ENCODE measurements at regions of chr3 and their contacts with region 1.

Region 1: GRCh38 chr3:195259475-195260279 is 11.3 kb downstream of the XXYLT1 start:
- DNase-seq: peak; percentile 91
- ATAC-seq: peak; percentile 74
- H3K4me3 ChIP-seq: peak overlapping the region; percentile 92
- H3K27ac ChIP-seq: peak overlapping the region; percentile 73
- H3K4me1 ChIP-seq: peaks cover 16% of the 10 kb centered on the region
- H3K27me3 ChIP-seq: no peaks in the 10 kb centered on the region
- CTCF ChIP-seq: peak; percentile 46; the same call in 1 of the 2 replicates

Region 2: DNA sequence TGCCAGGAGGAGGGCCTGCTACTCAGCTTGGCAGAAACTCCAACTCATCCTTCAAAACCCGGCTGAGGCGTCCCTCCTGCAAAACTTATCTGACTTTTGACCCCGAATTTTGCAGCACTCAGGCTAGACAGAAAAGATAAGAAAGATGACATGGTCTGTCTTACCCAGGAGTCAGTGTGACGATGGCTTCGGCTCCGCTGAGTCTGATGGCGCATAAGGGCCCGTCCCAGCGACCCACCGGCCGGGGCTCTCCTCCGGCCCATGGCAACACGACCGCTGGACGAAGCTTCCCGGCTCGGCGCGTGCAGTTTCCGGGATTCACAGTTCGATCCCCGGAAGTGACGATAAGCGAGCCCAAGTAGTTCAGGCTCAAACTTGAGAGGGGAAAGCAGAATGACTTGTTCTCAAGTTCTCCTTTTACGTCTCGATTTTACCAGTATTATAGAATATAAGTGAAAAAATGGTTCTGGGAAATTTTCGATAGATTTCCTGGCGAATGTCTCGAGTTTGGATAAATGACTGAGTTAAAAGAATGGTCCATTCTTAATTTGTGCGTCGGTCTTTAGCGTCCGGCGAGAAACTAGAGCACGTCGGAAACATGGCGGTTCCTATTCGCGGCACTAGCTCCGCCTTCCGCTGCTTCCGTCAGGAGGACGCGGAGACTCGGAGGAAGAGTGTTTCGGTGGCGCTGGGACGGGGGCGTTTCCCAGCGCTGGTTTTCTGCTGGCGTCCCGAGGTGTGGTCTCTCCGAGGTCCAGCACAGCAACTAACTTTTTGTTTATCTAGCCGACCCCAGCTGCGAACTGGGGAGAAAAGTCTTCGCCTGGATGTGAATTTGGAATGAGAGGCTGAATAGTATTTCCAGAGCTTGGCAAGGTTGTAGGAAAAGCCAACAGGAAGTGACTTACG is 587.5 kb before region 1 on chr3 and contains the start of gene LSG1:
- CTCF ChIA-PET with region 1: interaction called, 10 read pairs
- POLR2A ChIA-PET with region 1: no interaction called
- intact Hi-C with region 1: loop called (anchors 2 kb)
- DNase-seq: peak; percentile 97
- ATAC-seq: peak; percentile 96
- H3K4me3 ChIP-seq: peak within 1 kb of the TSS; percentile 87
- H3K27ac ChIP-seq: peak within 1 kb of the TSS; percentile 71
- H3K4me1 ChIP-seq: peaks cover 14% of the 10 kb centered on the region
- H3K27me3 ChIP-seq: no peaks in the 10 kb centered on the region
- CTCF ChIP-seq: no peak
- total RNA-seq, gene LSG1: 83.8 and 102 TPM in 2 replicates

Region 3: GRCh38 chr3:194964821-194965220 is 294.9 kb before region 1 on chr3:
- CTCF ChIA-PET with region 1: no interaction called
- POLR2A ChIA-PET with region 1: no interaction called
- intact Hi-C with region 1: loop called (anchors 1 kb)
- DNase-seq: peak; percentile 40
- ATAC-seq: peak; percentile 73
- H3K4me3 ChIP-seq: no peak overlapping the region
- H3K27ac ChIP-seq: no peak overlapping the region
- H3K4me1 ChIP-seq: no peaks in the 10 kb centered on the region
- H3K27me3 ChIP-seq: no peaks in the 10 kb centered on the region
- CTCF ChIP-seq: peak; percentile 36

Region 4: GRCh38 chr3:195001961-195002861 is 257.5 kb before region 1 on chr3:
- CTCF ChIA-PET with region 1: no interaction called
- POLR2A ChIA-PET with region 1: no interaction called
- intact Hi-C with region 1: loop called (anchors 5 kb)
- DNase-seq: peak; percentile 87
- ATAC-seq: peak; percentile 96
- H3K4me3 ChIP-seq: no peak overlapping the region
- H3K27ac ChIP-seq: no peak overlapping the region
- H3K4me1 ChIP-seq: peaks cover 11% of the 10 kb centered on the region; the same call in 1 of the 2 replicates
- H3K27me3 ChIP-seq: no peaks in the 10 kb centered on the region
- CTCF ChIP-seq: peak; percentile 83

Region 5: GRCh38 chr3:195106418-195106906 is 153.2 kb before region 1 on chr3:
- CTCF ChIA-PET with region 1: no interaction called
- POLR2A ChIA-PET with region 1: no interaction called
- intact Hi-C with region 1: loop called (anchors 5 kb)
- DNase-seq: peak; percentile 69
- ATAC-seq: peak; percentile 49
- H3K4me3 ChIP-seq: peak overlapping the region; percentile 34; the same call in 1 of the 2 replicates
- H3K27ac ChIP-seq: peak overlapping the region; percentile 88
- H3K4me1 ChIP-seq: peaks cover 50% of the 10 kb centered on the region
- H3K27me3 ChIP-seq: no peaks in the 10 kb centered on the region
- CTCF ChIP-seq: peak; percentile 98

Region 6: GRCh38 chr3:195154793-195155535 is 104.7 kb before region 1 on chr3:
- CTCF ChIA-PET with region 1: no interaction called
- POLR2A ChIA-PET with region 1: no interaction called
- intact Hi-C with region 1: loop called (anchors 10 kb)
- DNase-seq: peak; percentile 88
- ATAC-seq: peak; percentile 42
- H3K4me3 ChIP-seq: no peak overlapping the region
- H3K27ac ChIP-seq: peak overlapping the region; percentile 78
- H3K4me1 ChIP-seq: peaks cover 56% of the 10 kb centered on the region
- H3K27me3 ChIP-seq: no peaks in the 10 kb centered on the region
- CTCF ChIP-seq: no peak